ENCODE measurements at regions of chr2 and their contacts with region 1.

Region 1: GRCh38 chr2:241355983-241356870 is at the start of gene FARP2:
- DNase-seq: peak; percentile 98
- H3K4me3 Mint-ChIP-seq: peak within 1 kb of the TSS; percentile 75
- H3K27ac Mint-ChIP-seq: peak within 1 kb of the TSS; percentile 79
- H3K4me1 Mint-ChIP-seq: peaks cover 35% of the 10 kb centered on the region
- H3K27me3 Mint-ChIP-seq: no peaks in the 10 kb centered on the region
- total RNA-seq, gene FARP2: 25.1 to 29.5 TPM

Region 2: DNA sequence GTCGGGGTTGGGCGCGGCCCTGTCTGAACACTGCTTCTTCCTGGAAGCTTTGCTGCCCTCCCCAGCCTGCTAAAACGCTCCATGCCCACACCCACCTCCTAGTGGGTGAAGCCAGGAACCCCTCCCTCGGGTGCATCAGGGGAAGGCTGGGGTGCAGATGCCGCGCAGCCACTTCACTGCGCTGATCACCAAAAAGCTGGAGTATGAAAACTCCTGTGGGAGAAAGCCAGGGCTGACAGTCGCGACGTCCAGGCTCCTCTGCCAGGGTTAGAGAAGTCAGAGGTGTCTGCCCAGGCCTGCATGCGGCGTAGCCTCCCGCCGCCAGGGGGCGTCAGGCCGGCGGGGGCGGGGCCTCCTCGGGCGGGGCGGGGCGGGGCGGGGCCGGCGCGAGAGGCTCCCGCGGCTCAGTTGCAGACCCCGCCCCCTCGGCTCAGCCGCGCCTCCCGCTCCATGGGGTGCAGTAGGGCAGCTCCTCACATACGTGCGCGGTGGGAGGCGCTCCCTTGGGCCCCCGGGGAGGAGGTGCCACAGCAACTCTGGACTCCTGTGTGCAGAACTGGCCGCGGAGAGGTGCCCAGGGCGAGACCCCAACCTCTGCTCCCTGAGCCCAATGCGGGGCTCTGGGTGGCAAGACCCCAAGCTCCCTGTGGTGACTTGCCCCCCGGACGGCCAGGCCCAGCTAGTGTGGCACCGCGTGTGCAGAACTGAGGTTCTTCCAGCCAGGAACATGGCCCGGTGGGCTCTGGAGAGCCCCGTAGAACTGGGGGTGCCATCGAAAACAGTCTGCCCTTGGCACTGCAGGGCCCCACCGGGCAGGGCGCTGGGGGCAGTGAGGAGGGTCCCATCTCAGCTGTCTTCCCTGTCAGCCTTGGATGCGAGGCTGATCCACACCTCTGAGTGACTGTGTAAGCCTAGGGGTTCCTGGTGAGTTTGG is 789.8 kb before region 1 on chr2:
- CTCF ChIA-PET with region 1: no interaction called
- POLR2A ChIA-PET with region 1: no interaction called
- intact Hi-C with region 1: loop called (anchors 5 kb)
- DNase-seq: peak; percentile 96
- H3K4me3 Mint-ChIP-seq: peak overlapping the region; percentile 93
- H3K27ac Mint-ChIP-seq: peak overlapping the region; percentile 98
- H3K4me1 Mint-ChIP-seq: peaks cover 64% of the 10 kb centered on the region
- H3K27me3 Mint-ChIP-seq: no peaks in the 10 kb centered on the region

Region 3: DNA sequence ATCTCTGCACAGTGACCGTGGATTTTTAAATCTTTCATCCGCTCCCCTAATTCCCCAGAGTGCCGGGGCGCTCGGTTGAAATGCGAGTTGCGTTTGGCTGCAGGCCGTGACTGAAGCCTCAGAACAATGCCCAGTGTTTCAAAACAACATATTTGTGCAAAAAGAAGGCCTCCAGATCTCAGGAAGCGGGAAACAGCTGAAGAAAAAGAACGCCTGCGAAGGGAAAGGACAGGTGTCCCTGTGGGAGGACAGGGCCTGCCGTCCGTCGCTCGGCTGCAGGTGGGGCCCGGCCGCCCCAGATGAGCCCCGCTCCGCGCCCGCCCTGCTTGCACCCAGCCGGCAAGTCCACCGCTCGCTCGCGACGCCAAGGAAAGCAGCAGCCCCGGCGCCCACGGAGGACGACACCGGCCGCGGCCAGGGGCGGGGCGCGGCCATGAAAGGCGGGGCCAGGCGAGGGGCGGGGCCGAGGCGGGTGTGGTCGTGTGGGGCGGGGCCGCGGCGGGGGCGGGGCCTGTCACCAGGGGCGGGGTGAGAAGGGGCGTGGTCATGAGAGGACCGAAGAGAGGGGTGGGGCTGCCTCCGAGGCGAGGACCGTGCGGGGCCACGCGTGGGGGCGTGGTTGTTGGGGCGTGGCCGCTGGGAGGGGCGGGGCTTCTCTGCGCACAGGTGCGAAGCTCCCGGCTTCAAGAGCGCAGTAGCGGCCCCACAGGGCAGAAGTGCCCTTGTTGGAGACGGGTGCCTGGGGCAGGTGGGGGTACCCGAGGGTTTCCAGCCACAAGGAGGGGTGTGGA is 184.7 kb after region 1 on chr2:
- CTCF ChIA-PET with region 1: no interaction called
- POLR2A ChIA-PET with region 1: no interaction called
- intact Hi-C with region 1: no loop called
- DNase-seq: peak; percentile 75
- H3K4me3 Mint-ChIP-seq: peak overlapping the region; percentile 26
- H3K27ac Mint-ChIP-seq: no peak overlapping the region
- H3K4me1 Mint-ChIP-seq: peaks cover 3% of the 10 kb centered on the region
- H3K27me3 Mint-ChIP-seq: peaks cover 22% of the 10 kb centered on the region

Region 4: GRCh38 chr2:241617431-241618154 is 261.4 kb after region 1 on chr2:
- CTCF ChIA-PET with region 1: no interaction called
- POLR2A ChIA-PET with region 1: no interaction called
- intact Hi-C with region 1: loop called (anchors 5 kb)
- DNase-seq: peak; percentile 63
- H3K4me3 Mint-ChIP-seq: peak overlapping the region; percentile 74
- H3K27ac Mint-ChIP-seq: peak overlapping the region; percentile 87
- H3K4me1 Mint-ChIP-seq: peaks cover 47% of the 10 kb centered on the region
- H3K27me3 Mint-ChIP-seq: no peaks in the 10 kb centered on the region

Region 5: DNA sequence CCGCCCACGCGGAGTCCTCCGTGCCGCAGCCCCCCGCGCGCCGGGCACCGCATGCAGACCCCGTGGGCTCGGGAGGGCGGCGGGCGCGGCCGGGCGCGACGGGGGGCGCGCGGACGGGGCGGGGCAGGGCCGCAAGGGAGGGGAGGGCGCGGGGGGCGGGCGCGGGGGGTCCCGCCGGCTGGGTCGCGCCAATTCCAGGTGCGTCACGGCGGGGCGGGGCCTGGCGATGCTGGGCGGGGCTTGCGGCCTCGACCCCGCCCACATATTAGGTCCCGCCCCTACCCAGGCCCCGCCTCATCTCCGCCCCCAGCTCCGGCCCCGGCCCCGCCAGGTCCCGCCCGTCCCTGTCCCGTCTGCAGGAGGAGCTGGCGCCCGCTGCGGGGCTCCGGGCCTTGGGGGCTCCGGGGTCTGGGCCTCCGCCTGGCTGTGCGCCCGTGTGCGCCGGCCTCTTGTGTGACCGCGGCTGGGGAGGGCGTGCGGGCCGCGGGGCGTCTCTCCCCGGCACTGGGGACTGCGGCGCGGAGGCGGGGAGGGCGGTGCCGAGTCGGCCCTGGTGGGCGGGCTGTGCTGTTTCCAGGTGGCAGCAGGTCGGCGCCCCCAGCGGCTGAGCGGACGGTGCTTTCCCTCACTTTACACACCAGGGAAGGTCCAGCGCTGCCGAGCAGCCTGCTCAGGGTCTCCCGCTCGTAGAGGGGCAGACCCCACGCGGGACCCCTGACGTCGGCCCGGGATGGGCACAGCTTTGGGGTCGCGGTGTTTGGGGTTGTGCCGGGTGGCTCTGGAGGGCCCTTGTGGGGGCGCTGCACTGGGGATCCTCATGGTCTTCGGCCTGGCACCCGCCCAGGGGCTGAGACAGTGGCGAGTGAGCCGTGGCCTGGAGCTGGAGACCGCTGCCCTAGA is 346.2 kb after region 1 on chr2:
- CTCF ChIA-PET with region 1: no interaction called
- POLR2A ChIA-PET with region 1: no interaction called
- intact Hi-C with region 1: loop called (anchors 1 kb)
- DNase-seq: peak; percentile 90
- H3K4me3 Mint-ChIP-seq: peak overlapping the region; percentile 84
- H3K27ac Mint-ChIP-seq: peak overlapping the region; percentile 63
- H3K4me1 Mint-ChIP-seq: peaks cover 25% of the 10 kb centered on the region
- H3K27me3 Mint-ChIP-seq: no peaks in the 10 kb centered on the region